Mucosa of descending colon (tissue), 3 donors: ENCODE measurements at regions of chr11 and their contacts with region 1.

Region 1: DNA sequence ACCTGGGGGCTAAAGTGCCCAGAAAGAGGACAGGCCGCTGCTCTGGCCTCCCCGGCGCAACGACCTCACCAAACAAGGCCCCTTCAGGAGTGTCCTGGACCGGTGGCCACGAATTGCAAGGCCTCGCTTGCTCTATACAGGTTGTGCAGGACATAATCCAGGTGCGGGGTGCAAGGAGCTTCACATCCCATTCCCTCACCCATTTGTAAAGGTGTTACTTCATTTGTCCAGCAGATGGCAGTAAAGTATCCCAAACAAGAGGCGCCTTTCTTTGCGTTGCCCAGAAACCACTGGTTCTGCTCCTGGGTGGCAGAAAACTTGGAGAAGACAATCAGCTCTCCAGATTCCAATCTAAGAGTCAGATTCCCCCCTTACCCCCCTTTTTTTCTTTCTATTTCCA is 35.9 kb upstream of the PRDM11 start:
- DNase-seq: peak in 1 of 3 donors; percentile 74
- ATAC-seq: peak; percentile 84
- H3K4me3 ChIP-seq: no peak overlapping the region
- H3K4me1 ChIP-seq: no peaks in the 10 kb centered on the region
- CTCF ChIP-seq: peak; percentile 52

Region 2: DNA sequence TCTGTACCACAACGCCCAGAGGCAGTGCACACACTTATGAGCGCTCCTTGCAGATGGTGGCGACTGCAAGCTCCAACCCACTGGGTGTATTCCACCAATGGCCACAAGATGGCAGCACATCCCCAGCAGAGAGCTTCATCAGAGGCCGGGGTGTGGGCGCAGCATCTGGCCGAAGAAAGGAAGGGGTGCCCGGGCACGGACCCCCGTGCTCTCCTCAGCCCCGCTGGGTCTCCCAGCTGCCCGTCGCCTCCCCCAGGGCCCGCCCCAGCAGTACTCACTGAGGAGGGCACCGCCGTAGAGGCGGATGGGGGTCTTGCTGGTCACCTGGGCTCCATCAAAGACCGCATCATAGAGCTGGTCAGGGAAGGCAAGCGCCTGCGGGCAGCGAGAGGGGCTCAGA is 174.0 kb before region 1 on chr11:
- intact Hi-C with region 1: loop called (anchors 2 kb)
- DNase-seq: peak in 2 of 3 donors; percentile 88 to 92
- ATAC-seq: peak; percentile 81
- H3K4me3 ChIP-seq: no peak overlapping the region
- H3K4me1 ChIP-seq: no peaks in the 10 kb centered on the region
- CTCF ChIP-seq: peak; percentile 79

Region 3: DNA sequence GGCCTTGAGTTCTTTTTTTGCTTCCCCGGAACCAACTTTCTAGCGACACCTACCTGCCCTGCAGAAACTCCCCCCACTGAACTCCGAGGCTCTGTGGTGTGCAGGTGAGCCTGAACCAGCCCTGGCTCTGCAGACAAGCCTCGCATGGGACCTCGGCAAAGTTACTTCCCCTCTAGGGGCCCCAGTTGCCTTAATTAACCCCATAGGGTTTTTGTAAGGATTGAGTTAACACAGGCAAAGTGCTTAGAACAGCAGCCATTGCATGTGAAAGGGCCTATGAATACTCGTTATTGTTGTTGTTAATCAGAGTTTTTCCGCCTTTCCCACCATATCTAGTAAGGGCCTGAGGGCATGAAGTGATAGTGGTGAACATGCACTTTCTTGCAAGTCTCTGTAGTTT is 188.2 kb after region 1 on chr11:
- intact Hi-C with region 1: loop called in 1 of 2 experiments (anchors 5 kb)
- DNase-seq: no peak
- ATAC-seq: no peak
- H3K4me3 ChIP-seq: no peak overlapping the region
- H3K4me1 ChIP-seq: no peaks in the 10 kb centered on the region
- CTCF ChIP-seq: no peak

Region 4: GRCh38 chr11:45332276-45332934 is 221.8 kb after region 1 on chr11:
- intact Hi-C with region 1: loop called (anchors 2 to 5 kb)
- DNase-seq: peak in 1 of 3 donors; percentile 57
- ATAC-seq: peak; percentile 83
- H3K4me3 ChIP-seq: no peak overlapping the region
- H3K4me1 ChIP-seq: no peaks in the 10 kb centered on the region
- CTCF ChIP-seq: peak; percentile 70